ENCODE measurements at regions of chr21 and their contacts with region 1.

Region 1: GRCh38 chr21:37563641-37564340 is 197.2 kb downstream of the DYRK1A start:
- DNase-seq: peak; percentile 67 to 94
- H3K4me3 ChIP-seq: peak overlapping the region; percentile 66 to 78
- H3K27ac ChIP-seq: peak overlapping the region; percentile 94 to 97
- H3K4me1 ChIP-seq: peaks cover 3 to 13% of the 10 kb centered on the region in 2 donors
- H3K27me3 ChIP-seq: no peaks in the 10 kb centered on the region
- CTCF ChIP-seq: peak; percentile 46 to 64 (median 57)

Region 2: DNA sequence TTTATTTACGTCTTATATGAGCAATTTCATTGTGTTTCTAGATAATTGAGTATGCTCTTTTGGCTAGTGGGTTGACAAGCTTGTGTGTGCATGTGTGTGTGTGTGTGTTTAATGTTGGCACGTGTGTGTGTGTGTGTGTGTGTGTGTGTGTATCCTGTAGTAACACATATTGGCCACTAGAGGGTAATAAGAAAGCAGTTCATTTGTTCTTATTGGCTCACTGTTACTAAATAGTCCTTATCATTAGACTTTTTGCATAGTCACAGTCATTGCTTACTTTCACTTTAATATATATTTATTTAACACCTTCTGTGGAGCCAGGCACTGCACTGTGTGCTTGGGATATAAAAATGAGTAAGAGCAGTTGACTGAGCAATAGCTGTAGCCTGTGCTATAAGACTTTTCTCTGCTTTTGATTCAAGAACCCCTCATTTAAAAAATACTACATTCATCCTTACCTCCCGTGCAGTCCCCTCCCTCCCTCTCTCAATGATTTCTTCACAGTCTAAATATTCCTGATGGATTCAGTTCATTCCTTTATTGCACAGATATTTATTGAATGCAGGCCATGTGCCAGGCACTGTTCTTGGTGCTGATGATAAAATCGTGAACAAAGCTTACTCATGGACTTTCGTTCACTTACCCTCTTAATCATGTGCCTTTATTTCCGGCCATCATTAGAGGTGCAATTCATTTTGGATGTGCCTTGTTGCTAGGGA is 100.5 kb before region 1 on chr21:
- intact Hi-C with region 1: loop called (anchors 10 kb)
- DNase-seq: no peak
- H3K4me3 ChIP-seq: peak overlapping the region in 1 of 2 donors; percentile 20
- H3K27ac ChIP-seq: peak overlapping the region in 1 of 2 donors; percentile 39
- H3K4me1 ChIP-seq: peaks cover 9 to 62% of the 10 kb centered on the region in 2 donors
- H3K27me3 ChIP-seq: no peaks in the 10 kb centered on the region
- CTCF ChIP-seq: peak; percentile 31 to 48 (median 44)

Region 3: DNA sequence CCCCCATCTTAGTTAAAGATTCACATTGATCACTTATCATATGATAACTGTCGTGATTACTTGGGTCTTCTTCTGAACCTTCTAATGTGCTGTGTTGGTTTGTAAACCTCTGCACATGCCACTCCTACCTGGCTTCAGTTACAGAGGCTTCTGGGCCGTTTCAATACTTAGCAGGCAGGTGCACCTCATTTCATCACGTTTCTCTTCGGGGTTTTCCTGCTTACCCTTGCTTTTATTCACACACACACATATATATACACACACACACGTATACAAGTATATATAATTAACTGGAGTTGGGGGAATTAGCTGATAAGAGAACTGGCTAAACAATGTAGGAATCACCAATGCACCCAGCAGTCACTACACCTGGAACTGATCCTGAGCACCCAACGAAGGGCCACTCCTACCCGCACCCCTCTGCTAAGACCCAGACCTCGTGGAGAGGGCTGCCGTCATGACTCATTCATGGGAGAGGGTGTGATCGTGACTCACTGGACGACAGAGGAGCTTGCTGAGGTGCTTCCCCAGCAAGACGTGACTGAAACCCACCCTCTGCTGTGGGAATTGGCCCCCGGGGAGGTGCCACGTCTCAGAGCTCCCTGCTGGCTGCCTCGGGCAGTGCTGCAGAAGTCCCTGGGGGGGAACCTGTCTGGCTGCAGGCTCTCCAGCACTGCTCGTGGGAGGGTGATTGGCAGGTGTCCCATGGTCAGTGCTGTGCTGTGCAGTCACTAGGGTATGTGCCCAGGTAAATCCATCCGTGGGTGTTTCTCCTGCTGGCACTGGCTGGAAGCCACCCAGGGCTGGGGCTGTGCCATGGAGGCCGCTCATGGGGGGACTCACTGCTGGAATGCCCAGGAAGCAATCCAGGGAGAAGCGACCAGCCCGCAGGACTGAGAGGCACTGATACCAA is 30.7 kb before region 1 on chr21:
- intact Hi-C with region 1: loop called (anchors 2 kb)
- DNase-seq: no peak
- H3K4me3 ChIP-seq: no peak overlapping the region
- H3K27ac ChIP-seq: no peak overlapping the region
- H3K4me1 ChIP-seq: peaks cover 3 to 14% of the 10 kb centered on the region in 2 donors
- H3K27me3 ChIP-seq: no peaks in the 10 kb centered on the region
- CTCF ChIP-seq: no peak

Region 4: GRCh38 chr21:37620401-37620800 is 56.6 kb after region 1 on chr21:
- intact Hi-C with region 1: loop called (anchors 5 kb)
- DNase-seq: no peak
- H3K4me3 ChIP-seq: no peak overlapping the region
- H3K27ac ChIP-seq: no peak overlapping the region
- H3K4me1 ChIP-seq: peaks cover 0 to 20% of the 10 kb centered on the region in 2 donors
- H3K27me3 ChIP-seq: no peaks in the 10 kb centered on the region
- CTCF ChIP-seq: no peak

Region 5: DNA sequence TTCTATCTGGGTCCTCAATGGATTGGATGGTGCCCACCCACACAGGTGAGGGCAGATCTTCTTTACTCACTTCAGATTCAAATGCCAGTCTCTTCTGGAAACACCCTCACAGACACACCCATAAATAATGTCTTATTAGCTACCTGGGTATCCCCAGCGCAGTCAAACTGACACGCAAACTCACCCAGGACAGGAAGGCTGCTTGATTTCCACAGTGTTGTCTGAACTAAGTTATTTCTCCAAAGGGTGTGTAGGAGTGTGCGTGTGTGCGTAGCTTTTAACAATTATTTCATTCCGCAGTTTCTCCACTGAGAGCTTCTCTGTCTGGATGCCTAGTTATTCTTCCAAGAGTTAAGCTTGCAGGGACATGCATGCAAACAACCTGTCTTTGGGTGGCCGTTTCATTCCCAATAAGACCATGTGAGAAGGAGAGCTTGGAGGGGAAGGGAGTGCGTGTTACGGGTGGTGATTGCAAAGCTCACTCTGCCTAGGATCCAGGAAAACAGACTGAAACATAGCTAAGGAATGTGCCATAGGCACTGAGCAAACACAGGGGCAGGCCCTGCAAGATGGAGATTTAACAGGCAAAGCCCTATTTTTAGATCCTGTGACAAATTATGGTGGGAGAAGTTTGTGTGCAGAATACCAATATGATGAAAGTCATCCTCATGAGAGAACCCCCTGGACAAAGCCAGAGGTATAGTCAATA is 72.5 kb after region 1 on chr21:
- intact Hi-C with region 1: loop called (anchors 5 kb)
- DNase-seq: no peak
- H3K4me3 ChIP-seq: peak overlapping the region in 1 of 2 donors; percentile 4
- H3K27ac ChIP-seq: peak overlapping the region; percentile 42 to 50
- H3K4me1 ChIP-seq: peaks cover 6 to 13% of the 10 kb centered on the region in 2 donors
- H3K27me3 ChIP-seq: no peaks in the 10 kb centered on the region
- CTCF ChIP-seq: no peak

Region 6: GRCh38 chr21:37658817-37659458 is 95.1 kb after region 1 on chr21:
- intact Hi-C with region 1: loop called (anchors 1 kb)
- DNase-seq: peak; percentile 35 to 82
- H3K4me3 ChIP-seq: peak overlapping the region in 1 of 2 donors; percentile 26
- H3K27ac ChIP-seq: peak overlapping the region; percentile 67 to 81
- H3K4me1 ChIP-seq: peaks cover 5 to 14% of the 10 kb centered on the region in 2 donors
- H3K27me3 ChIP-seq: no peaks in the 10 kb centered on the region
- CTCF ChIP-seq: peak; percentile 3 to 39 (median 37)

Measured in ascending aorta (tissue), 2 donors.